OCI-LY7 (cell line): ENCODE measurements at regions of chr12 and their contacts with region 1.

Region 1: DNA sequence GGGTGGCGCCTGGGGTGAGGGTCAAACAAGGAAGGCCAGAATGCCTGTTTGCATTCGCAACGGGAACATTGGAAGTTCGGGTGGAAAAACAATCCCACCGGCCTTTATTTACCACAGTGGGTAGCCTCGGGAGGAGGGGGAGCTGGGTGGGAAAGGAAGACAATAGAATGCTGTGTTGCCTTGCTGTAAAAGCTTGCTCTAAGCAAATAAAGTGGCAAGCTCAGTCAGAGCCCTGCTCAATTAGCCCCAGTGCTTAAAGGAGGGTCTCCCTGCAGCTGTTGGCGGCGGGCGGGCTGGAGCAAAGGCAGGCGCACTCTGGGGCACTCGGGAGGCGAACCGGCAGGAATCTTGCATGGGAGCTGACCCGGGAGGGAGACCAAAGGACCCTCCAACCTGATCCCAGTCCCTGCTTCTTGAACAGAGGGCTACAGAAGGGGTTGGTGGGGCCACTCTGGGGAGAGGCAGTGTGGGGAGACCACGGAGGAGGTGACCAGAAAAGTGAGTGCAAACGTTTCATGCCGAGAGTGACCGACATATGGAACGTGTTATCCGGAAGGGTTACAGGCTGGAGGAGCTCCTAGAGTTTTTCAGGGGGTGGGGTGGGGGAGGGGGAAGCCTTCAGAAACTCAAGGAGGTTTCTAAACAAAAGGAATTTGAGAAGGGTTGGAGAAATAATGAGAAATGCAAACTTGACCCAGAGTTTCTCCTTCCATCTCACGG is 48.5 kb downstream of the NTF3 start:
- DNase-seq: no peak
- H3K4me3 ChIP-seq: no peak overlapping the region
- H3K27ac ChIP-seq: peak overlapping the region; percentile 98
- H3K4me1 ChIP-seq: peaks cover 61% of the 10 kb centered on the region
- CTCF ChIP-seq: no peak

Region 2: DNA sequence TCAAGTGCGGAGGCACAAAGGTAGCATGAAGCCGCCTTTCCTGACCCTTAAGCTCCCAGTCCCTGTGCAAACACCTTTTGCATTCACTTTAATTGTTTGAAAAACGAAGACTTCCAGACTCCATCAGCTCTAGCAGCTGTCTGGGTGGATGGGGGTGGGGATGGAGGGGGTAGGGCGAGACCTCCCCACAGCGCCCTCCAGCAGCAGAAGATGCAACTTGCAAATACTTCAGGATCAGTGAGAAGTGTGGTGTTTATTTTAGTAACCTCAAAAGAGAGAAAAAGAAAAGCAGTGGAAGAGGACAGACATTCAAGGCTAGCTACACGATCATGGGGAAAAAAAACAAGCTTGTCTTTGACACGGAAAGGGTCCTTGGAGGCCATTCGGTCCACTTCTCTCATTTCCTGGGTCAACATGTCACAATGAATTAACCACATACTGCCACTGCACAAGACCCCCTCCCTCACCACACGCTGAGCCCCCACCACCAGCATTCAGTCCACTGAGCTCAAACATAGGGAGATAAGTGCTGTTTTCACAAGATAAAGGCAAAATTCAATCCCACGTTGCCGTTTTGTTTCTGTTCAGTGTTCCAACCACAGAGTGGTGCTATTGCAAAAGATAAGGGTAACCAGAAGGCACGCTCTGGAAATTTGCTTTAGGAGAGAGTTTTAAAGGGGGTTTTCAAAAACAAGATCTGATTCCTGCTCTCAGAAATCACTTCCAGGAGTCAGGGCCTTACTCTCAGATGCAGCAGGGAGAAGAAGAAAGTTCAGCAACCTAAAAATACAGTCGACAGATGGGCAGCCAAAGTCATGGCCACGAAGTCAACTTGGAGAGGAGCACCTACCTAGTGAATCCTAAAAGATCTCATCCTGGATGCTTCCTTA is 51.8 kb before region 1 on chr12:
- CTCF ChIA-PET with region 1: interaction called, 3 read pairs
- POLR2A ChIA-PET with region 1: interaction called, 16 read pairs
- intact Hi-C with region 1: loop called (anchors 2 kb)
- DNase-seq: peak; percentile 77
- H3K4me3 ChIP-seq: peak overlapping the region; percentile 93
- H3K27ac ChIP-seq: peak overlapping the region; percentile 56
- H3K4me1 ChIP-seq: peaks cover 36% of the 10 kb centered on the region
- CTCF ChIP-seq: peak; percentile 95

Region 3: GRCh38 chr12:5456906-5457305 is 23.5 kb before region 1 on chr12:
- CTCF ChIA-PET with region 1: interaction called, 8 read pairs
- POLR2A ChIA-PET with region 1: interaction called, 29 read pairs
- intact Hi-C with region 1: loop called (anchors 1 kb)
- DNase-seq: peak; percentile 83
- H3K4me3 ChIP-seq: peak overlapping the region; percentile 57
- H3K27ac ChIP-seq: peak overlapping the region; percentile 87
- H3K4me1 ChIP-seq: peaks cover 50% of the 10 kb centered on the region
- CTCF ChIP-seq: no peak

Region 4: GRCh38 chr12:5470221-5470620 is 10.2 kb before region 1 on chr12:
- CTCF ChIA-PET with region 1: no interaction called
- POLR2A ChIA-PET with region 1: interaction called, 10 read pairs
- intact Hi-C with region 1: no loop called
- DNase-seq: no peak
- H3K4me3 ChIP-seq: no peak overlapping the region
- H3K27ac ChIP-seq: no peak overlapping the region
- H3K4me1 ChIP-seq: peaks cover 63% of the 10 kb centered on the region
- CTCF ChIP-seq: no peak